ENCODE measurements at regions of chr1 and their contacts with region 1.

Region 1: DNA sequence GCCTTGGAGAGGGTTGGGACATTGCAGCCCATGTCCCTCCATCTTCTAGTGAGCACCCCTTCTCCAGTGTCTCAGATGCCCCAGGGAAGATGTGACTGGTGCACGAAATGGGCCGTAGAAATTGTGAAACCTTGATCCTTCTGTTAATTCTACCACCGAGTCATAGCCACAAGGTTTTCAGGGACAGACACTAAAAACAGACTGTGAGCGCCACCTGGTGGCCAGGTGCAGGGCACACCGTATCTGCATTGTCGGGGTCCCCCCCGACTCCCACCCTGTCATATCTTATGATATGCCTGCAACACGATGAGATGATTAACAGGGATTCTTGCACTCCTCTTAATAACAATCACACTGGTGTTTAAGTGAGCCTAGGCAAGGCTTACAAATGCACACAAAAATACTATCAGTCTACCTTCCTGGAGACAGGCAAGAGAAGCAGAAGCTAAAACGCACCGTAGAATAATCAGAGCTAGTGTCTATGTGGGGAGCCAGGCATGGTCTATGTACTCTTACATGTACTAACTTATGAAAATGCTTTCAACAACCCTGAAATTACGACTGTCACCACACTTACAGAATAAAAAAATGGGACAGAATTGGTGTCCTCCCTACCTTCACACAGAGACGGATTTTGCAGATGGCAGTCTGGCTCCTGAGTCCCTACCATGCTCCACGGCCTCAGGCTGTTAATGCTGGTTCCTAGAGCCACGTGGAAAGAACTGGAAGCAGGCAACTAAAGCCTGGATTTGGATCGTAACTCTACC is 57.9 kb downstream of the FHAD1 start:
- DNase-seq: peak in 2 of 3 donors; percentile 80 to 89
- ATAC-seq: peak; percentile 47
- H3K4me3 ChIP-seq: no peak overlapping the region
- H3K4me1 ChIP-seq: no peaks in the 10 kb centered on the region
- CTCF ChIP-seq: peak; percentile 85

Region 2: DNA sequence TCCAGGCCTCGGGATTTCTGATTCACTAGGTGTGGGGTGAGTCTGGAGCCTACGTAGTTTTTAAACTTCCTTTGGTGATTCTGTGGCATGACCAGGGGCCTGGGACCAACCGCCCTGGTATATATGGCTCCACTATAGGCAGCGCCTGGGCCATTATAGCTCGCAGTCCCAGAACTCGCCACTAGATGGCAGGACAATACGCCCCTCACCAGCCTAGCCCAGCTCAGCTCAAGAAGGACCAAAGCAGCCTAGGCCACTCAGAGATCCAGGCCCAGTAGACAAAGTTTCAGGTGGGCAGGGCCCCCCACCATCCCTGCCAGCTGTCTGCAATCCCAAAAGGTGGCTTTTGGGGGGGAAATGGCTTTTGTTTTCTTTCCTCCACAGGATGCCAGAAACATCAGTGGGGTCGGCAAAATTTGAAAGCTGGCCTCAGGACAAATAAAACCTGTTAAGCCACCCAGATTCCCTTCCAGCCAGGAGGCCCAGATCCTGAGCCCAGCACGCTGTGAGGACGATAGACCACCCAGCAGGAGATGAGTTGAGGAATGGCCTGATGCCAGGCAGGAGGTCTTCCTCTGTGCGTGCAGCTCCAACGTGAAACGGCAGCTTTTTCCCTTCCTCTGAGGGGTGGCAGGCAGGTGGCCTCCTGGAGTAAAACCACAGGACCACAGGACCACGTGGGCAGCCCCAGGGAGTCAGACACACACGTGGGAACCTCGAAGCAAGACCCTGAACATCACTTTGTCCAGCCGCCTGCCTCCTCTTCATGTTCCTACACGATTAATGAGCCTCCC is 176.2 kb before region 1 on chr1:
- intact Hi-C with region 1: loop called (anchors 10 kb)
- DNase-seq: peak in 2 of 3 donors; percentile 87 to 92
- ATAC-seq: peak; percentile 98
- H3K4me3 ChIP-seq: no peak overlapping the region
- H3K4me1 ChIP-seq: no peaks in the 10 kb centered on the region
- CTCF ChIP-seq: peak; percentile 89

Region 3: GRCh38 chr1:15469361-15469760 is 164.5 kb after region 1 on chr1:
- intact Hi-C with region 1: no loop called
- DNase-seq: no peak
- ATAC-seq: no peak
- H3K4me3 ChIP-seq: no peak overlapping the region
- H3K4me1 ChIP-seq: no peaks in the 10 kb centered on the region
- CTCF ChIP-seq: no peak

Measured in mucosa of descending colon (tissue), 3 donors.